AG04450 (cell line): ENCODE measurements at regions of chr1 and their contacts with region 1.

Region 1: DNA sequence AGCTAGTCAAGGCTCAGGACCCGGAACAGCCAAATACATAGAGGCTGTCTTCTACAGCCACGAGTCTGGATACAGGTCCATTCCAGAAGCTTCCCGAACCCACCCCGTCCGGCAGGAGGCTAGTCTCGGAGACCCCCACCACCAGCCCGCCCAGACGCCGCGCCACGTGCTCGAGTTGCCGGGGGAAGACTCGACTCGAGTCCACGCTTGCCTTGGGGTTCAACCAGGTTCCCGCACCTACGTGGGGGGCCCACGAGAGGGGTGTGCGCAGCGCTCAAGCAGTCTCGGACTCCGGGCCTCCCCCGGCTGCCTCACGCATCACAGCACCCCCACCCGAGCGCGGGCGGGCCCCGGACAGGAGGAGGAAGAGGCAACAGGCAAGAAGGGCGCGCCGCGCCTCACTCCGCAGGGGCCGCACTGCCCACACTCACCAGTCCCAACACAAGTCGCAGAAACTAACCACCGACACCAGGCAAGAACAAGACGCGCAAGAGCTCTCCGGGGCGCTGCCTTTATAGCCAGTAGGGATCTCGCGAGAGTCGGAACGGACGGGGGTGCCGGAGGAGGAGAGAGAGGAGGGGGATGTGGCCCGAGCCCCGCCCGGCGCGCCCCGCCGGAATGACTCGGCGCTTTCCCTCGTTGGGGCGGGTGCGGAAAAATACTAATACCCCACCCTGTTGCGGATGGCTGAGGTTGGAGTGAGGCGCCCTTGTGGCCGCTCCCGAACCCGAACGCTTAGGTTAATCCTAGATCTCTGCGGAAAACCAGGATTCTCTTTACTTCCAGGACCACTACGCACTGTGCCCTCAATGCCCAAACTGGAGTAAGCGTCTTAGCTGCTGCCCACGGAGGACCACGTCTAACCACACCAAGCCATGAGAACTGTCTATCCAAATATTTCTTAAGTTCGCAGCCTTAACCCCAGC is at the start of gene PRDX1:
- DNase-seq: peak; percentile 91
- H3K4me3 ChIP-seq: peak within 1 kb of the TSS; percentile 96
- H3K27ac ChIP-seq: peak within 1 kb of the TSS; percentile 99
- H3K27me3 ChIP-seq: no peaks in the 10 kb centered on the region
- CTCF ChIP-seq: peak; percentile 26
- polyA plus RNA-seq, gene PRDX1: 988 and 1,110 TPM in 2 replicates

Region 2: DNA sequence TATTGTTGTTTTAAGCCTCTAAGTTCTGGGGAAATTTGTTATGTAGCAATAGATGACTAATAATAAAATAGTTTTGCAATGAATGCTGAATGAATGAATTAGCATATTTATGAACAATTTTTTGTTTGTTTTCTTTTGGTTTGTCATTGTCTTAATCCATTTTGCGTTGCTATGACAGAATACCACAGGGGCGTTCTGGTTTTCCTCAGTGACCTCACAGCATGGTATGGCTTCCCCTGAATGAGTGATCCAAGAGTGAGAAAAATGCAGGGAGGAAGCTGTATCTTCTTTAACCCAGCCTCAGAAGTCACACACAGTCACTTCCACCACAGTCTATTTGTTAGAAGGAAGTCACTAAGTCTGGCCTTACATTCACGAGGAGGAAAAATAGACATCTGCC is 248.7 kb before region 1 on chr1:
- CTCF ChIA-PET with region 1: no interaction called
- POLR2A ChIA-PET with region 1: no interaction called
- DNase-seq: peak; percentile 26
- H3K4me3 ChIP-seq: no peak overlapping the region
- H3K27ac ChIP-seq: peak overlapping the region; percentile 66
- H3K27me3 ChIP-seq: no peaks in the 10 kb centered on the region
- CTCF ChIP-seq: no peak

Region 3: GRCh38 chr1:45303582-45304310 is 217.9 kb before region 1 on chr1:
- CTCF ChIA-PET with region 1: no interaction called
- POLR2A ChIA-PET with region 1: interaction called, 23 read pairs
- DNase-seq: peak; percentile 93
- H3K4me3 ChIP-seq: peak overlapping the region; percentile 78
- H3K27ac ChIP-seq: peak overlapping the region; percentile 86
- H3K27me3 ChIP-seq: no peaks in the 10 kb centered on the region
- CTCF ChIP-seq: peak; percentile 69

Region 4: DNA sequence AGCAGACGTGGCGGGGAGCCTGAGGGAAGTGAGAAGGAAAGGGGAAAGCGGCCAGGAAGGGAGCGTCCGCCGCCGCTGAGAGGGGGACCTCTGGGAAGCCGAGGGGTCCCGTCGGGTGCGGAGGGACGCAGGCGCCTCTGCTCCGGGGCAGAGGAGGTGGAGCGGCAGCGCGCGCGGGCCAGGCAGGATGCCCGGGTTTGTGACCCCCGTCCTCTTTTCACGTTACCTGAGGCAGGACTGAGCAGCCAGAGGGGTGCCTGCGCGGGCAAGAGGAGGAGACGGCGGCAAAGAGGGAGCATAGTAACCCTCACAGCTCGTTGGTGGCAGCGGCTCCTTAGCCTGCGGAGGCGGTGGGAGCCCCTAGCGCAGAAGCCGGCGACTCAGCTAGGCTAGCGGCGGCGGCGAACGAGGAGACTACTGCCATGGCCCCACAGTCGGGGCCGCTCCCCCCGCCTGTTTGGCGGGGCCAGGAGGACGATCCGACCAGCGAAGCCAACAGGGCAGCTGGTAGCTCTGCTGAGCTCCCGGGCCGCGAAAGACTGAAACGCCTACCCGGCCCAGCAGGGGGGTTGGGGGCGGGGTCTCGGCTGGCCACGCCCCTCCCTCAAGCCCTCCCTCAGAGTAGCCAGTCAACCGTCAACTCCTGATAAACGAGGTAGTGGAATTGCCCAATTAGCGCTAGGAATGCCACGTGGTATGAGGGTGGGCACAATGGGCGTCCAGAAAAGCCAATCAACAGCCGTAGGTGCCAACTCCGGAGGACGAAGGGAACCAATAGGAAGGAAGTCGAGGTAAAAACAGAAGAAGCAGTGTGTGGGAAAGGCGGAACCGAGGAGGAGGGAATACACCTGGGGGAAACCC is 30.8 kb before region 1 on chr1 and contains the start of gene TESK2:
- CTCF ChIA-PET with region 1: interaction called, 6 read pairs
- POLR2A ChIA-PET with region 1: interaction called, 33 read pairs
- DNase-seq: peak; percentile 98
- H3K4me3 ChIP-seq: peak within 1 kb of the TSS; percentile 85
- H3K27ac ChIP-seq: peak within 1 kb of the TSS; percentile 47
- H3K27me3 ChIP-seq: no peaks in the 10 kb centered on the region
- CTCF ChIP-seq: no peak
- polyA plus RNA-seq, gene TESK2: 2.5 and 2.6 TPM in 2 replicates

Region 5: DNA sequence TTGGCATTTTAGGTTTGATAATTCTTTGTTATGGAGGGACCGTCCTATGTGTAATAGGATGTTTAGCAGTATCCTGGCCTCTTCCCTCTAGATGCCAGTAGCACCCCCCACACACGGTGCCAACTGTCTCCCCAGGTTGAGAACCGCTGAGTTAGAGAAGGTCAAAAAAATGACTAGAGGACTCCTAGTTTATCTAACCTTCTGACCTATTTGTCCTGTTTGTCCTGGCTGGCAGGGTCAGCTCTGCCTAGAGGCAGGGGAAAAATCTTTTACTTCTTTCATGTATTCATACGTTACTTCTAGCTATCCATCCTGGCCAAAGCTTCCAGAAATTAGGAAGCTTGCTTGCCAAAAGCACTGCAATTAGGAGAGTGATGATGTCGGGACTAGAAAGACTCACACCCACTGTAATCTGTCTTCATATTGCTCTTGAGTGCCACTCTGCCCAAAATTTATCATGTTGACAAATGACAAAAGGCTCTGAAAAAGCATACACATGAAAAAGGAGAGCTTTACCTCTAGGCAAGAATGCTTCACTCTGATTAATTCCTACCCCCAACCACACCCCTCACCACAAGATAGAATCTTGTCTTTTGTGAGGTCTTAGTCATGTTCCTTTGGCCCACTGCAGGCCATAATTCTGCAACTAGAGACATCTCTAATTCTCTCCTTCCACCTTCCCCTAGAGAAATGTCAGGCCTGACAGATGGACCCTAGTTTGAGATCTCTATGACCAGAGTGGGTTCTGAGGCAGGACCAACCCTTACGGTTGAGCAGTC is 14.5 kb after region 1 on chr1:
- CTCF ChIA-PET with region 1: no interaction called
- POLR2A ChIA-PET with region 1: interaction called, 34 read pairs
- DNase-seq: no peak
- H3K4me3 ChIP-seq: no peak overlapping the region
- H3K27ac ChIP-seq: no peak overlapping the region
- H3K27me3 ChIP-seq: peaks cover 5% of the 10 kb centered on the region
- CTCF ChIP-seq: no peak

Region 6: GRCh38 chr1:45550401-45551351 is 29.0 kb after region 1 on chr1 and contains the start of gene AKR1A1:
- CTCF ChIA-PET with region 1: interaction called, 3 read pairs
- POLR2A ChIA-PET with region 1: interaction called, 134 read pairs
- DNase-seq: peak; percentile 43
- H3K4me3 ChIP-seq: peak within 1 kb of the TSS; percentile 94
- H3K27ac ChIP-seq: peak within 1 kb of the TSS; percentile 95
- H3K27me3 ChIP-seq: no peaks in the 10 kb centered on the region
- CTCF ChIP-seq: 0 out of 2 replicates have a peak, but pooled peaks have one; percentile 3
- polyA plus RNA-seq, gene AKR1A1: 150 and 175 TPM in 2 replicates

Region 7: GRCh38 chr1:45569962-45570581 is 48.4 kb after region 1 on chr1:
- CTCF ChIA-PET with region 1: interaction called, 4 read pairs
- POLR2A ChIA-PET with region 1: interaction called, 37 read pairs
- DNase-seq: peak; percentile 58
- H3K4me3 ChIP-seq: no peak overlapping the region
- H3K27ac ChIP-seq: no peak overlapping the region
- H3K27me3 ChIP-seq: no peaks in the 10 kb centered on the region
- CTCF ChIP-seq: peak; percentile 99

Region 8: DNA sequence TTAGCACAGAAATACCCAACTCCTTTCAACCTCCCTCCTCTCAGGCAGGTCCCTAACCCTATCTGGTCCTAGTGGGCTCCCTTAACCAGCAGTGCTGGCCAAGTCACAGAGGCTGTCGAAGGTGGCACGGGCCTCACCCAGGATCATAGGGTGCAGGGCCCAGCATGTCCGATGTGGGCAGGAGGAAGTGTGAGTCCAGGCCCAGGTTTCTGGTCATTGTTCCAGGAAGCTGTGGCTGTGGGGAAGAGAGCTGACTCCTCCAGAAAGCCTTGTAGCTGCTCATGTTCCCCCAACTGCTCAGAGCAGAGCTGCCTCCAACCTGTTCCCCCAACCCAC is 99.8 kb after region 1 on chr1:
- CTCF ChIA-PET with region 1: no interaction called
- POLR2A ChIA-PET with region 1: no interaction called
- DNase-seq: no peak
- H3K4me3 ChIP-seq: no peak overlapping the region
- H3K27ac ChIP-seq: peak overlapping the region; percentile 11
- H3K27me3 ChIP-seq: no peaks in the 10 kb centered on the region
- CTCF ChIP-seq: no peak

Region 9: GRCh38 chr1:46247436-46248121 is 725.9 kb after region 1 on chr1 and contains the start of gene RAD54L:
- CTCF ChIA-PET with region 1: no interaction called
- POLR2A ChIA-PET with region 1: interaction called, 10 read pairs
- DNase-seq: peak; percentile 98
- H3K4me3 ChIP-seq: peak within 1 kb of the TSS; percentile 92
- H3K27ac ChIP-seq: peak within 1 kb of the TSS; percentile 83
- H3K27me3 ChIP-seq: no peaks in the 10 kb centered on the region
- CTCF ChIP-seq: no peak
- polyA plus RNA-seq, gene RAD54L: 1.8 and 1.9 TPM in 2 replicates